Right ventricle myocardium inferior (tissue), 1 donor: ENCODE measurements at regions of chr15 and their contacts with region 1.

Region 1: GRCh38 chr15:92383519-92384326 is 10.0 kb upstream of the ST8SIA2 start:
- DNase-seq: no peak
- ATAC-seq: no peak

Region 2: DNA sequence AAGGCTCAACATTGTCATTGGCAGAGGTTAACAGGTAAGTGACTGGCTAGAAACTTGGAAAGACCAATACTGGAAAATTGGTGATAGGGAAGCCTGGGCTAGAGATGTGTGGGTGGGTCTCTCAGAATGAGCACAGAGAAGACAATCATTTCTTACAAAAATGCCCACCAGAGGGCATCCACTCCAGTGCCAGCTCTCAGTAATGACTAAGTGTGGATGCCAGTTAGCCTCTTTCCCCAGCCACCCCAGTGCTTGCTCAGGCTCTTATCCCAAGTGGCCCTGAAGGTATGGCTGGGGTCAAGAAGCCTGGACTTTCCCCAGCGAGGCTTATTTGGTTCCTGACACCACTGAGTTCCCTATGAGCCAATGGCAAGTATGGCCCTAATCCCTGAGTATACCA is 105.9 kb before region 1 on chr15:
- intact Hi-C with region 1: loop called (anchors 2 kb)
- DNase-seq: no peak
- ATAC-seq: peak; percentile 59

Region 3: DNA sequence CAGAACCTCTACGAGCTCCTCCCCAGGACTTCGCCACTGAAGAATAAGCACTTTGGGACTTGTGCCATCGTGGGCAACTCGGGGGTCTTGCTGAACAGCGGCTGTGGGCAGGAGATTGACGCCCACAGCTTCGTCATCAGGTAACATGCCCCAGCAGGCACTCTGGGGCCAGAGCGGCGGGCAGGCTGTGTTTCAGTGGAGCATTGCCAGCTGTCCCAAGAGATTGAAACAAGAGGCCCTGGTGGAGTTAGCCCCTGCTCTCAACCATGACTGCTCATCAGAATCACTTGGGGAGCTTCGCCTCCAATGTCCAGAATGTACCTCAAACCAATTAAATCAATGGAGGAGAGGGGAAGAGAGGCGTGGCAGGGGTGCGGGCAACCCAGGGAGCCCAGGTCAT is 54.7 kb after region 1 on chr15:
- intact Hi-C with region 1: no loop called
- DNase-seq: no peak
- ATAC-seq: no peak